Activated CD8-positive, alpha-beta T cell treated with anti-CD3 and anti-CD28 coated beads for 36 hours (primary cell): ENCODE measurements at regions of chr12 and their contacts with region 1.

Region 1: GRCh38 chr12:53727310-53728041 is at the start of gene CALCOCO1:
- DNase-seq: peak; percentile 99
- ATAC-seq: peak; percentile 97
- H3K4me3 Mint-ChIP-seq: peak within 1 kb of the TSS; percentile 87
- H3K27ac Mint-ChIP-seq: peak within 1 kb of the TSS; percentile 95
- H3K4me1 Mint-ChIP-seq: peaks cover 28% of the 10 kb centered on the region
- H3K27me3 Mint-ChIP-seq: no peaks in the 10 kb centered on the region
- CTCF ChIP-seq: no peak
- total RNA-seq, gene CALCOCO1: 15.5 to 16.2 TPM

Region 2: GRCh38 chr12:53683494-53683893 is 44.0 kb before region 1 on chr12:
- CTCF ChIA-PET with region 1: no interaction called
- POLR2A ChIA-PET with region 1: no interaction called
- intact Hi-C with region 1: no loop called
- DNase-seq: no peak
- ATAC-seq: no peak
- H3K4me3 Mint-ChIP-seq: no peak overlapping the region
- H3K27ac Mint-ChIP-seq: no peak overlapping the region
- H3K4me1 Mint-ChIP-seq: no peaks in the 10 kb centered on the region
- H3K27me3 Mint-ChIP-seq: peaks cover 15% of the 10 kb centered on the region
- CTCF ChIP-seq: no peak

Region 3: DNA sequence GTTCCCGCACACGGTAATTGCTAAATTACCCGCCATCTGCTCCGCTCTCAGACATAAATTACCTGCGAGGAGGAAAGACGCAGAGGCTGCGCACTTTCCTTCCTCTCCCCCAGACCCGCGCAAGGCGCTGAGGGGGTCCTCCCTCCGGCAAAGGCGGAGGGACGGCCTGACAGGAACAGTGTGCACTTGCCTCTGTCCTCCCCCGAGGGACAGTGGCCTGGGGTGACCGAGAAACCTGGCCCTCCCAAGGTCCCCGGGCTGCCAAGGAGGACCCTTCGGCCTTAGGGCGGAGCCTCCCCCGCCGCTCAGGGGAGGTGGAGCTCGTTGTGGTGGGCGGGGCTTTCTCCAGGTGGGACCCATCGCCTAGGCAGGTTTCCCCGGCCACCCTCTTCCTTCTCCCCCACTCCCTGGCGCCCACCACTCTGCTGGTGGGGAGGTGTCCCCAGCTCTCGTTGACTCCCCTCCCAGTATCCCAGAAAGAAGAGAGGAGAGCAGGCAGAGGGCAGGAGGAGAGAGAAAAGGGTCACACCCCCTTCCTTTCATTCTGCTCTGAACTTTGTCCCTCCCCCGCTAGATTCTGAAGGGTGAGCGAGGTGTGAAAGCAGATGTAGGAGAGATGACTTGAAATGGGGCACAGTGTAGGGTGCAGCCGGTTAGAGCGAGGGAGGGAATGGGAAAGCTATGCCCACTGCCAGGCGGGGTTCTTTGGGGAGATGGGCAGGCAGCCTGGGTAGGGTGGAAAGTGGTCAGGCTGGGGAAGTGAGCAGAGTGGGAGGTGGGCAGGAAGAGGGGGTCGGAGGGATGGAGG is 11.1 kb after region 1 on chr12:
- CTCF ChIA-PET with region 1: interaction called, 418 read pairs
- POLR2A ChIA-PET with region 1: interaction called, 40 read pairs
- intact Hi-C with region 1: no loop called
- DNase-seq: peak; percentile 57
- ATAC-seq: peak; percentile 80
- H3K4me3 Mint-ChIP-seq: peak overlapping the region; percentile 45
- H3K27ac Mint-ChIP-seq: no peak overlapping the region
- H3K4me1 Mint-ChIP-seq: peaks cover 19% of the 10 kb centered on the region
- H3K27me3 Mint-ChIP-seq: peaks cover 39% of the 10 kb centered on the region
- CTCF ChIP-seq: no peak